Mammary epithelial cell (primary cell): ENCODE measurements at regions of chr3 and their contacts with region 1.

Region 1: GRCh38 chr3:193872265-193872753 is 263.6 kb upstream of the HES1 start:
- DNase-seq: peak; percentile 100
- H3K4me3 ChIP-seq: no peak overlapping the region
- H3K27ac ChIP-seq: peak overlapping the region; percentile 94
- H3K4me1 ChIP-seq: peaks cover 71% of the 10 kb centered on the region
- H3K27me3 ChIP-seq: no peaks in the 10 kb centered on the region
- CTCF ChIP-seq: no peak

Region 2: DNA sequence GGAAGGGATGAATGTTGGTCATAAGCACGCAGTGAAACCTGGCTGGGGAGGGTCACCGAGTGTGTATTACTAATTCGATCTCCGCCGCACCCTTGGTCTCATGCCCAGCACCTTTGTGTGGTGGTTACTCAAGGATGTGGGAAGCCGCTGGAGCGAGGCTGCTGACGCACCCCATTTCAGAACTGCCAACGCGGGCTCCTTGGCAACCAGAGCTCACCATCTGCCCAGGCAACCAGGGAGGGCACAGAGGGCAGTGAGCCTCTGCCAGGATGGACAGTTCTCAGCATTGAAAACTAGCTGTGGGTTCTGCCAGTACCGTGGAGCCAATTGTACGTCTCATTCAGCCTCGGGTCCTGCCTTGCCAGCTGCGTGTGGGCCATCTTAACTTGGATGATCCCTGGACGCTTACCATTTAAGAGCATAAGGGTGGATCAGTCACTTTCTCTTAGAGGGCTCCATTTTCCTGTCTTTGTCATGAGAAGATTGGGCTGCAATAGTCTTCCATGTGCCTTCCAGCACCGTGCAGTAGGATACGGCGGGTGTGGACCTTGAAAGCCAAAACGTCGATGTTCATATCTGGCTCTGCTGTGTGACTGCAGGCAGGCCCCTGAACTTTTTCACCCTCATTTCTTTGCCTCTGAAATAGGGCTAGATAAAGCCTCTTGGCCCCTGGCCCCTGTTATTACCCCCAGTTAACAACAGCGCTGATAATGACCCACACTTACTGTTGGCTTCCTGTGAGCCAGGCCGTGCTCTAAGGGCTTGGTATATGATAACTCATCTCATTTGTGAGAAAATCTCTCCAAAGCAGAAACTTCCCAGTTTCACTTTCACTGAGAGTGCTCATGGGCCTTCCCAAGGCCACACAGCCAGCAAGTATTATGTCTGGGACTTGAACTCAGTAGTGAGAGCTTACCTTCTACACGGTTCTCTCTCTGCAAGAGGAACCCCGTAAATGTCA is 40.5 kb before region 1 on chr3:
- CTCF ChIA-PET with region 1: no interaction called
- dilution Hi-C with region 1: no loop called
- in situ Hi-C with region 1: loop called in 1 of 2 experiments (anchors 5 kb)
- intact Hi-C with region 1: loop called (anchors 1 kb)
- DNase-seq: peak; percentile 100
- H3K4me3 ChIP-seq: no peak overlapping the region
- H3K27ac ChIP-seq: peak overlapping the region; percentile 100
- H3K4me1 ChIP-seq: peaks cover 51% of the 10 kb centered on the region
- H3K27me3 ChIP-seq: no peaks in the 10 kb centered on the region
- CTCF ChIP-seq: no peak

Region 3: GRCh38 chr3:193928354-193929209 is 56.3 kb after region 1 on chr3:
- CTCF ChIA-PET with region 1: no interaction called
- dilution Hi-C with region 1: no loop called
- in situ Hi-C with region 1: no loop called
- intact Hi-C with region 1: no loop called
- DNase-seq: peak; percentile 91
- H3K4me3 ChIP-seq: no peak overlapping the region
- H3K27ac ChIP-seq: peak overlapping the region; percentile 21
- H3K4me1 ChIP-seq: peaks cover 17% of the 10 kb centered on the region
- H3K27me3 ChIP-seq: no peaks in the 10 kb centered on the region
- CTCF ChIP-seq: no peak

Region 4: GRCh38 chr3:194003125-194004057 is 131.1 kb after region 1 on chr3:
- CTCF ChIA-PET with region 1: no interaction called
- dilution Hi-C with region 1: no loop called
- in situ Hi-C with region 1: no loop called
- intact Hi-C with region 1: loop called (anchors 1 kb)
- DNase-seq: peak; percentile 94
- H3K4me3 ChIP-seq: peak overlapping the region; percentile 29 to 41 (median 32)
- H3K27ac ChIP-seq: peak overlapping the region; percentile 75
- H3K4me1 ChIP-seq: peaks cover 25% of the 10 kb centered on the region
- H3K27me3 ChIP-seq: no peaks in the 10 kb centered on the region
- CTCF ChIP-seq: no peak

Region 5: GRCh38 chr3:194089357-194090177 is 217.3 kb after region 1 on chr3:
- CTCF ChIA-PET with region 1: no interaction called
- dilution Hi-C with region 1: no loop called
- in situ Hi-C with region 1: no loop called
- intact Hi-C with region 1: loop called (anchors 1 kb)
- DNase-seq: peak; percentile 100
- H3K4me3 ChIP-seq: no peak overlapping the region
- H3K27ac ChIP-seq: peak overlapping the region; percentile 77
- H3K4me1 ChIP-seq: peaks cover 34% of the 10 kb centered on the region
- H3K27me3 ChIP-seq: no peaks in the 10 kb centered on the region
- CTCF ChIP-seq: no peak